Prostate gland (tissue), 2 donors: ENCODE measurements at regions of chr3 and their contacts with region 1.

Region 1: GRCh38 chr3:85068911-85069310 is 110.1 kb downstream of the CADM2 start:
- DNase-seq: no peak
- H3K4me3 ChIP-seq: no peak overlapping the region
- H3K27ac ChIP-seq: no peak overlapping the region
- H3K4me1 ChIP-seq: no peaks in the 10 kb centered on the region
- H3K27me3 ChIP-seq: no peaks in the 10 kb centered on the region
- CTCF ChIP-seq: no peak
- POLR2A ChIP-seq: no peak

Region 2: GRCh38 chr3:85142626-85143025 is 73.7 kb after region 1 on chr3:
- intact Hi-C with region 1: loop called (anchors 2 kb)
- DNase-seq: no peak
- H3K4me3 ChIP-seq: no peak overlapping the region
- H3K27ac ChIP-seq: no peak overlapping the region
- H3K4me1 ChIP-seq: no peaks in the 10 kb centered on the region
- H3K27me3 ChIP-seq: no peaks in the 10 kb centered on the region
- CTCF ChIP-seq: no peak
- POLR2A ChIP-seq: no peak